ENCODE measurements at regions of chr6 and their contacts with region 1.

Region 1: DNA sequence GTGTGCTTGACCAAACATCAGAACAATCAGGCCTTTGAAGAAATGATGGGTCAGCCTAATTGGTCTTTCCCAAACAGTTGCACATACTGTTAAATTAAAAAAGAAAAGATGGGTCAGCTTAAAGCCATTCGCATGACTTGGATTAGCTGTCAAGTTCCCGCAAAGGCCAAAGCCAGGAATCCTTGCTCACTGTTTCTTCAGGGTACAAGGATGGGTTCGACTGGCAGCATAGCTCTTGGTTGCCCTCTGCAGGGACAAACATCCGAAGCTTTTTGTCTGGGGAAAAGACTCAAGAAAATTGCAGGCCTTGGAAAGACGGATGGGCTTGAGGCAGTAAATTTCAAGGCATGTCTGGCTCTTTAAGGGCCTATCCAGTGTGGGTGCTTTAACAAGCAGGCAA is 168.0 kb downstream of the HDGFL1 start:
- DNase-seq: peak in 3 of 5 donors; percentile 13 to 57 (median 28)
- ATAC-seq: peak in 2 of 4 donors; percentile 32 to 73
- H3K4me3 ChIP-seq: no peak overlapping the region
- H3K27ac ChIP-seq: no peak overlapping the region
- H3K4me1 ChIP-seq: peaks cover 0 to 6% (median 0%) of the 10 kb centered on the region in 12 donors
- H3K27me3 ChIP-seq: no peaks in the 10 kb centered on the region
- CTCF ChIP-seq: peak; percentile 35 to 77 (median 56)
- POLR2A ChIP-seq: no peak

Region 2: GRCh38 chr6:22622351-22622750 is 115.0 kb before region 1 on chr6:
- intact Hi-C with region 1: loop called in 1 of 10 experiments (anchors 10 kb)
- DNase-seq: no peak
- ATAC-seq: no peak
- H3K4me3 ChIP-seq: no peak overlapping the region
- H3K27ac ChIP-seq: peak overlapping the region in 2 of 12 donors; percentile 10 to 46
- H3K4me1 ChIP-seq: peaks cover 0 to 24% (median 4%) of the 10 kb centered on the region in 12 donors
- H3K27me3 ChIP-seq: no peaks in the 10 kb centered on the region
- CTCF ChIP-seq: no peak
- POLR2A ChIP-seq: no peak

Measured in heart left ventricle (tissue), 16 donors.